PC-9 (cell line): ENCODE measurements at regions of chr20 and their contacts with region 1.

Region 1: GRCh38 chr20:53611449-53611894 is 17.8 kb upstream of the ZNF217 start:
- DNase-seq: peak; percentile 52 to 90
- H3K4me3 ChIP-seq: no peak overlapping the region
- H3K27ac ChIP-seq: peak overlapping the region; percentile 90
- H3K4me1 ChIP-seq: peaks cover 32% of the 10 kb centered on the region
- H3K27me3 ChIP-seq: no peaks in the 10 kb centered on the region
- CTCF ChIP-seq: no peak

Region 2: GRCh38 chr20:53643031-53643832 is 31.8 kb after region 1 on chr20:
- CTCF ChIA-PET with region 1: interaction called, 3 read pairs
- POLR2A ChIA-PET with region 1: interaction called, 10 read pairs
- intact Hi-C with region 1: no loop called
- DNase-seq: peak; percentile 73 to 98
- H3K4me3 ChIP-seq: peak overlapping the region; percentile 26
- H3K27ac ChIP-seq: peak overlapping the region; percentile 94
- H3K4me1 ChIP-seq: peaks cover 39% of the 10 kb centered on the region
- H3K27me3 ChIP-seq: no peaks in the 10 kb centered on the region
- CTCF ChIP-seq: no peak; the same call in 1 of the 2 replicates

Region 3: GRCh38 chr20:53656293-53657202 is 45.1 kb after region 1 on chr20:
- CTCF ChIA-PET with region 1: interaction called, 3 read pairs
- POLR2A ChIA-PET with region 1: interaction called, 17 read pairs
- intact Hi-C with region 1: no loop called
- DNase-seq: peak in 1 of 2 experiments; percentile 78
- H3K4me3 ChIP-seq: peak overlapping the region; percentile 12; the same call in 1 of the 2 replicates
- H3K27ac ChIP-seq: peak overlapping the region; percentile 84
- H3K4me1 ChIP-seq: peaks cover 65% of the 10 kb centered on the region
- H3K27me3 ChIP-seq: no peaks in the 10 kb centered on the region
- CTCF ChIP-seq: no peak